ENCODE measurements at regions of chr3 and their contacts with region 1.

Region 1: GRCh38 chr3:42749753-42750231 is 23.3 kb downstream of the CCDC13 start:
- DNase-seq: peak; percentile 16
- H3K4me3 ChIP-seq: no peak overlapping the region
- H3K27ac ChIP-seq: no peak overlapping the region
- H3K4me1 ChIP-seq: no peaks in the 10 kb centered on the region
- H3K27me3 ChIP-seq: no peaks in the 10 kb centered on the region
- CTCF ChIP-seq: peak; percentile 51 to 74

Region 2: GRCh38 chr3:42502429-42503250 is 247.2 kb before region 1 on chr3 and contains the start of gene VIPR1:
- CTCF ChIA-PET with region 1: no interaction called
- dilution Hi-C with region 1: no loop called
- in situ Hi-C with region 1: no loop called
- intact Hi-C with region 1: loop called (anchors 5 kb)
- DNase-seq: peak; percentile 80
- H3K4me3 ChIP-seq: peak within 1 kb of the TSS; percentile 34 to 68 (median 46)
- H3K27ac ChIP-seq: no peak within 1 kb of the TSS
- H3K4me1 ChIP-seq: peaks cover 14% of the 10 kb centered on the region
- H3K27me3 ChIP-seq: no peaks in the 10 kb centered on the region
- CTCF ChIP-seq: no peak
- total RNA-seq, gene VIPR1: 4.7 to 21.3 TPM

Region 3: GRCh38 chr3:42581709-42582473 is 167.9 kb before region 1 on chr3 and contains the start of gene SEC22C:
- CTCF ChIA-PET with region 1: no interaction called
- dilution Hi-C with region 1: no loop called
- in situ Hi-C with region 1: loop called in 1 of 2 experiments (anchors 10 kb)
- intact Hi-C with region 1: loop called (anchors 1 kb)
- DNase-seq: peak; percentile 95
- H3K4me3 ChIP-seq: peak within 1 kb of the TSS; percentile 80 to 95 (median 87)
- H3K27ac ChIP-seq: peak within 1 kb of the TSS; percentile 82
- H3K4me1 ChIP-seq: peaks cover 8% of the 10 kb centered on the region
- H3K27me3 ChIP-seq: no peaks in the 10 kb centered on the region
- CTCF ChIP-seq: peak in 1 of 2 donors; percentile 48
- total RNA-seq, gene SEC22C: 53.2 to 68.7 TPM

Region 4: GRCh38 chr3:42652611-42653302 is 97.0 kb before region 1 on chr3:
- CTCF ChIA-PET with region 1: interaction called, 5 read pairs
- dilution Hi-C with region 1: no loop called
- in situ Hi-C with region 1: no loop called
- intact Hi-C with region 1: loop called (anchors 1 kb)
- DNase-seq: peak; percentile 75
- H3K4me3 ChIP-seq: peak overlapping the region; percentile 5 to 75 (median 59)
- H3K27ac ChIP-seq: no peak overlapping the region
- H3K4me1 ChIP-seq: peaks cover 42% of the 10 kb centered on the region
- H3K27me3 ChIP-seq: no peaks in the 10 kb centered on the region
- CTCF ChIP-seq: no peak

Region 5: DNA sequence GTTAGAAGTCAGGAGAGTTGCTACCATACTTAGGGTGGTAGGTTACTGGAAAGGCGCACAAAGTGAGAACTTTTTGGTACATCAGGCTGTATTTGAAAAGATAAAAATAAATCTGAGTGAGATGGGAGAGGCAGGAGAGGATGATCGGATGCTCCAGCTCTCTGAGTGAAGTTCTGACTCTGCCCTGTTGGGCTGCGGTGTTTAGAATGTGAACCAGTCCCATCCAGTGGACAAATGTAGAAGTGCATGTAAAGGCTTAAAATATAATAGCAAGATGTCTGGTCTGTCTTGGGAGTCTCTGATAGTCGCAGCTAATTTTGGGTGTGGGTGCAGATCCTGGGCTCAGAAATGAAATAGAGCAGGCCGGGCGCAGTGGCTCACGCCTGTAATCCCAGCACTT is 89.8 kb after region 1 on chr3:
- CTCF ChIA-PET with region 1: no interaction called
- dilution Hi-C with region 1: no loop called
- in situ Hi-C with region 1: no loop called
- intact Hi-C with region 1: loop called (anchors 1 kb)
- DNase-seq: peak; percentile 60
- H3K4me3 ChIP-seq: no peak overlapping the region
- H3K27ac ChIP-seq: no peak overlapping the region
- H3K4me1 ChIP-seq: no peaks in the 10 kb centered on the region
- H3K27me3 ChIP-seq: no peaks in the 10 kb centered on the region
- CTCF ChIP-seq: peak; percentile 77 to 86

Measured in mammary epithelial cell (primary cell).